ENCODE measurements at regions of chr19 and their contacts with region 1.

Region 1: GRCh38 chr19:36573020-36573885 is at the start of gene ZNF529:
- DNase-seq: peak; percentile 84 to 87
- H3K4me3 ChIP-seq: peak within 1 kb of the TSS; percentile 90
- H3K27ac ChIP-seq: peak within 1 kb of the TSS; percentile 55
- H3K4me1 ChIP-seq: peaks cover 6% of the 10 kb centered on the region; the same call in 1 of the 2 replicates
- H3K27me3 ChIP-seq: no peaks in the 10 kb centered on the region
- CTCF ChIP-seq: no peak
- total RNA-seq, gene ZNF529: 4.0 and 4.2 TPM in 2 replicates

Region 2: DNA sequence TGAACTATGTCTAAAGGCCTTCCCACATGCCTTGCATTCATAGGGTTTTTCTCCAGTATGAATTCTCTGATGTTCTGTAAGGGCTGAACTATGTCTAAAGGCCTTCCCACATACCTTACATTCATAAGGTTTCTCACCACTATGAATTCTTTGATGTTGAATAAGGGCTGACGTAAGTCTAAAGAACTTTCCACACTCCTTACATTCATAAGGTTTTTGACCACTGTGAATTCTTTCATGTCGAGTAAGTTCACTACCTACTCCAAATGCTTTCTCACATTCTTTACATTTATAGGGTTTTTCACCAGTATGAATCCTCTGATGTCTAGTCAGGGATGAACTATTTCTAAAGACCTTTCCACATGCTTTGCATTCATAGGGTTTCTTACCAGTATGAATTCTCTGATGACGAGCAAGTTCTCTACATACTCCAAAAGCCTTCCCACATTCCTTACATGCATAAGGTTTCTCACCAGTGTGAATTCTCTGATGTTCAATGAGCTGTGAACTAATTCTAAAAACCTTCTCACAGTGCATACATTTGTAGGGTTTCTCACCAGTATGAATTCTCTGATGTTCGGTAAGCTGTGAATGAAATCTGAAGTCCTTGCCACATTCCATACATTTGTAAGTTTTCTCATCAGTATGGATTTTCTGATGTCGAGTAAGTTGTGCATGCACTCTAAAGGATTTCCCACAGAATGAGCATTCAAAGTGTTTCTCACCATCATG is 26.1 kb before region 1 on chr19:
- CTCF ChIA-PET with region 1: no interaction called
- POLR2A ChIA-PET with region 1: no interaction called
- intact Hi-C with region 1: no loop called
- DNase-seq: peak in 1 of 2 experiments; percentile 38
- H3K4me3 ChIP-seq: no peak overlapping the region
- H3K27ac ChIP-seq: no peak overlapping the region
- H3K4me1 ChIP-seq: no peaks in the 10 kb centered on the region
- H3K27me3 ChIP-seq: no peaks in the 10 kb centered on the region
- CTCF ChIP-seq: no peak

Region 3: DNA sequence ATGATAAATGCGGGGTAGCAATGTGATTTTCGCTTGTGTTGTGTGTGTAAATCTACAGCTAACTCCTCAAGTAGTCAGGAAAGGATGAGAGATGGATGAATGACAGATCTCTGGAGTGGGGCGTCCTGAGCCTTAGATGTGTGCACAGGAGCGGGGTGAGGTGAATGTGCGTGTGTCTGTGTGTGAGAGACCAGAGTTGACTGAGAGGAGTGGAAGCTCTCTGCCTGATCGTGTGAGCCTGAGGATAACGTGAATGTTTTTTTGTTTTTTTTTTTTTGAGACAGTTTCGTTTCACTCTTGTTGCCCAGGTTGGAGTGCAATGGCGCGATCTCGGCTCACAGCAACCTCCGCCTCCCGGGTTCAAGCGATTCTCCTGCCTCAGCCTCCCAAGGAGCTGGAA is 92.6 kb after region 1 on chr19:
- CTCF ChIA-PET with region 1: no interaction called
- POLR2A ChIA-PET with region 1: no interaction called
- intact Hi-C with region 1: loop called (anchors 1 kb)
- DNase-seq: no peak
- H3K4me3 ChIP-seq: peak overlapping the region; percentile 79
- H3K27ac ChIP-seq: no peak overlapping the region
- H3K4me1 ChIP-seq: 0 out of 2 replicates have a peak, but pooled peaks cover 5% of the 10 kb centered on the region
- H3K27me3 ChIP-seq: no peaks in the 10 kb centered on the region
- CTCF ChIP-seq: no peak

Measured in PC-9 (cell line).